T-cell (primary cell): ENCODE measurements at regions of chr14 and their contacts with region 1.

Region 1: DNA sequence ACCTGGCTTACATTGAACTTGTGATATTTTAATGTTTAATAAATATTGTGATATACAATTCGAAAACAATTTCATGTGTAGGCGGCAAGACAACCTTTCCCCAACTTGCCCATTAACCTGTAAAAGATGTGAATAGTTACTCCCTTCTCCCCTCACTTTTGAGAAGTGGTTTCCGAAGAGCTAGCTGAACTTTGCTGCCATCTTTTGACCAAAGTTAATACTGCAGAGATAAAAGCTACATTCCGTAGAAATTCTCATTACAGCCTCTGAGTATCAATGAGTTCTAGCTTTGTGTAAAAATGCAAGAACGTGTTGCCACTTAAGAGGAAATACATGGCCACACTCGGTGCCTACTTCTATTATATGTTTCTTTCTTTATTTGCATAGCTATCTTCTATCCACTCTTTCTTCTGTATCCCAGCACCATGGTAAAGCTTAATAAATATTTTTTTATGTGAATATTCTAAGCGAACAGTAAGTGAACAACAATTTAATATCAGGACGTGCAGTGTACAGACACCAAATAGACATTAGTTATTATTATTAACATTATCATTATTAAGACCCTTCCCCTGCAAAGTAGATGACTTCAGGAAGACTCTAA is 105.1 kb upstream of the TMEM260 start:
- DNase-seq: peak in 3 of 35 experiments; percentile 10 to 63 (median 30)
- ATAC-seq: peak in 2 of 4 experiments; percentile 38 to 54
- H3K4me3 ChIP-seq: no peak overlapping the region
- H3K4me3 Mint-ChIP-seq: no peak overlapping the region
- H3K27ac ChIP-seq: no peak overlapping the region
- H3K27ac Mint-ChIP-seq: no peak overlapping the region
- H3K4me1 ChIP-seq: no peaks in the 10 kb centered on the region
- H3K4me1 Mint-ChIP-seq: no peaks in the 10 kb centered on the region
- H3K27me3 ChIP-seq: peaks cover 0 to 6% of the 10 kb centered on the region in 2 experiments
- H3K27me3 Mint-ChIP-seq: peaks cover 8 to 16% of the 10 kb centered on the region in 2 donors

Region 2: DNA sequence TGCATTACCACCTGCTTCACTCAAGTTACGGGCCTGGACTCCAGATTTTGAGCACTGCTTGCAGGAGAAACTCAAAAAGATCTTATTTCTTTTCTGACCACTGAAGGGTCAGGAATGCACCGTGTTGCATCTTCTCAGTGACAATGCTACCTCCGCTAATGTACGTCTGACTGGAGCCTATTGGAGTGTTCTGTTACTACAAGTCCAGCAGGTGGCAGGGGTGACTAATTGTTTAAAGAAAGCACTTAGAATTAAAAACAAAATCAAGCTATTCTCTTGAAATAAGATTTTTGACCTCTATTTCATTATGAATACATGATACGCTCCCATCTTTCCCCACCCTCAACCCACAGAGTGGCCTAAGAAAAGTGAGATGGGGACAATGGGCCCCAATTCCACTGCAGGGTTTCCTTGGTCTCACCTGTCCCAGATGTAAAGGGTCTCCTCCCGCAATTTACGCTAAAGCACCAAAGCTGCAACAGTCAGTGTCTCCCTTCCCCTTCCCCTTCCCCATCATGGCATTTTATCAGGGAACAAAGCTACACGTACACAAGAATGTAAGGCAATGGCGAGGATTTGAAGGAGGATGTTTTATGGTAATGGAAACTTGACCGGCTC is 1036.3 kb before region 1 on chr14:
- CTCF ChIA-PET with region 1: interaction called in 1 of 2 experiments, 11 read pairs
- POLR2A ChIA-PET with region 1: no interaction called
- DNase-seq: peak in 2 of 35 experiments; percentile 16 to 34
- ATAC-seq: no peak
- H3K4me3 ChIP-seq: no peak overlapping the region
- H3K4me3 Mint-ChIP-seq: no peak overlapping the region
- H3K27ac ChIP-seq: no peak overlapping the region
- H3K27ac Mint-ChIP-seq: no peak overlapping the region
- H3K4me1 ChIP-seq: peaks cover 16 to 18% of the 10 kb centered on the region in 2 experiments
- H3K4me1 Mint-ChIP-seq: peaks cover 19 to 21% (median 20%) of the 10 kb centered on the region in 3 donors
- H3K27me3 ChIP-seq: peaks cover 0 to 11% of the 10 kb centered on the region in 2 experiments
- H3K27me3 Mint-ChIP-seq: peaks cover 0 to 2% of the 10 kb centered on the region in 2 donors

Region 3: DNA sequence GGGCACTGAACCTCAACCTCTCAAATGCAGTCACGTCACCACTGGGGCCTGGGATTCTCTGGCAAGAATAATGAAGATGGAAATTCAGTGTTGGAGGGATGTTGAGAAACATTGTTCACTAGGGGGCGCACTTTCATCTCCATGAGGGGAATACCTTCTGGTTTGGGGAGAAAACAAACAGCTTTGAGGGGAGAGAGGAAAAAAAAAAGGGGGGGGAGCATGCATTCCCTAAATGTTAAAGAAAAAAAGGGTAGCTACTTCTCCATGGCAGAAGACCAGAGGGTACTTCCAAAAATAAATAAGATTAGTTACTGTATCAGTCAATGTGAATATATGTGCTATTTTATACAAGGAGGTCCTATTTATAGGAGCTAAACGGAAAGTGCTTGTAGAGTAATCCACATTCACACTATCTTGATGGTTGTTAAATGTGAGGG is 1028.3 kb before region 1 on chr14:
- CTCF ChIA-PET with region 1: interaction called, 10 to 24 read pairs
- POLR2A ChIA-PET with region 1: no interaction called
- DNase-seq: peak in 29 of 35 experiments; percentile 8 to 79 (median 32)
- ATAC-seq: peak in 2 of 4 experiments; percentile 44 to 56
- H3K4me3 ChIP-seq: no peak overlapping the region
- H3K4me3 Mint-ChIP-seq: no peak overlapping the region
- H3K27ac ChIP-seq: no peak overlapping the region
- H3K27ac Mint-ChIP-seq: no peak overlapping the region
- H3K4me1 ChIP-seq: no peaks in the 10 kb centered on the region
- H3K4me1 Mint-ChIP-seq: peaks cover 3 to 6% (median 3%) of the 10 kb centered on the region in 3 donors
- H3K27me3 ChIP-seq: no peaks in the 10 kb centered on the region
- H3K27me3 Mint-ChIP-seq: peaks cover 0 to 2% of the 10 kb centered on the region in 2 donors

Region 4: DNA sequence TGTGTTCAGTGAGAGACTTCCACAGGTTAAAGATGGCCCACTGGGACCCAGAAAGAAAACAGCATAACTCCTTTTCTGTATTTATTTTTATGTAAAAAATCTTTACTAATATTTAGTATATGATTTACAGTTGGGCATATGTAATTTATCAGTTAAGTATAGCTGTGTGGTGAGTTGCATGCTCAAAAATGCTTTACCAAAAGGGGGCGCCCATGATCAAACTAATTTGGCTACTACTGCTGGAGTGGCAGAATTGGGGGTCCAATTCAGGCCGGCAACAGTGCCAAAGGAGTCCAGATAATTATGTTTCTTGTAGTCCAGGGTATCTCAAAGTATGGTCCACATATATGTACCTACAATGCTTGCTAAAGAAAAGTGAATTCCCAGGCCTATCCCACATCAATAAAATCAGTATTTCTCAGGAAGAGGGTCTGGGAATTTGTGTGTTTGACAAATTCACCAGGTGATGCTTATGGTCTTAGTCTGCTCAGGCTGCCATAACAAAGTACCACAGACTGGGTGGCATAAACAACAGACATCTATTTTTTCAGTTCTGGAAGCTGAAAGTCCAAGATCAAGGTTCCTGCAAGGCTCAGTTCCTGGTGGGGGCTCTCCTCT is 742.5 kb before region 1 on chr14:
- CTCF ChIA-PET with region 1: interaction called, 7 to 45 read pairs
- POLR2A ChIA-PET with region 1: no interaction called
- DNase-seq: peak in 32 of 35 experiments; percentile 8 to 67 (median 36)
- ATAC-seq: peak in 1 of 4 experiments; percentile 49
- H3K4me3 ChIP-seq: no peak overlapping the region
- H3K4me3 Mint-ChIP-seq: no peak overlapping the region
- H3K27ac ChIP-seq: no peak overlapping the region
- H3K27ac Mint-ChIP-seq: no peak overlapping the region
- H3K4me1 ChIP-seq: no peaks in the 10 kb centered on the region
- H3K4me1 Mint-ChIP-seq: peaks cover 0 to 11% (median 0%) of the 10 kb centered on the region in 3 donors
- H3K27me3 ChIP-seq: no peaks in the 10 kb centered on the region
- H3K27me3 Mint-ChIP-seq: no peaks in the 10 kb centered on the region

Region 5: GRCh38 chr14:56412468-56413434 is 61.8 kb before region 1 on chr14:
- CTCF ChIA-PET with region 1: no interaction called
- POLR2A ChIA-PET with region 1: interaction called in 1 of 2 experiments, 11 read pairs
- DNase-seq: no peak
- ATAC-seq: no peak
- H3K4me3 ChIP-seq: no peak overlapping the region
- H3K4me3 Mint-ChIP-seq: peak overlapping the region; percentile 59 to 73 (median 67)
- H3K27ac ChIP-seq: no peak overlapping the region
- H3K27ac Mint-ChIP-seq: no peak overlapping the region
- H3K4me1 ChIP-seq: no peaks in the 10 kb centered on the region
- H3K4me1 Mint-ChIP-seq: peaks cover 12 to 16% (median 13%) of the 10 kb centered on the region in 3 donors
- H3K27me3 ChIP-seq: no peaks in the 10 kb centered on the region
- H3K27me3 Mint-ChIP-seq: peaks cover 0 to 7% of the 10 kb centered on the region in 2 donors

Region 6: GRCh38 chr14:56491299-56492285 is 17.1 kb after region 1 on chr14:
- CTCF ChIA-PET with region 1: interaction called, 7 to 13 read pairs
- POLR2A ChIA-PET with region 1: interaction called in 1 of 2 experiments, 3 read pairs
- DNase-seq: peak in 24 of 35 experiments; percentile 1 to 58 (median 9)
- ATAC-seq: peak; percentile 40 to 61 (median 50)
- H3K4me3 ChIP-seq: no peak overlapping the region
- H3K4me3 Mint-ChIP-seq: peak overlapping the region in 2 of 3 donors; percentile 6 to 28
- H3K27ac ChIP-seq: no peak overlapping the region
- H3K27ac Mint-ChIP-seq: no peak overlapping the region
- H3K4me1 ChIP-seq: peaks cover 2 to 4% of the 10 kb centered on the region in 2 experiments
- H3K4me1 Mint-ChIP-seq: peaks cover 8 to 14% (median 9%) of the 10 kb centered on the region in 3 donors
- H3K27me3 ChIP-seq: no peaks in the 10 kb centered on the region
- H3K27me3 Mint-ChIP-seq: peaks cover 0 to 8% of the 10 kb centered on the region in 2 donors